PC-9 (cell line): ENCODE measurements at regions of chr15 and their contacts with region 1.

Region 1: DNA sequence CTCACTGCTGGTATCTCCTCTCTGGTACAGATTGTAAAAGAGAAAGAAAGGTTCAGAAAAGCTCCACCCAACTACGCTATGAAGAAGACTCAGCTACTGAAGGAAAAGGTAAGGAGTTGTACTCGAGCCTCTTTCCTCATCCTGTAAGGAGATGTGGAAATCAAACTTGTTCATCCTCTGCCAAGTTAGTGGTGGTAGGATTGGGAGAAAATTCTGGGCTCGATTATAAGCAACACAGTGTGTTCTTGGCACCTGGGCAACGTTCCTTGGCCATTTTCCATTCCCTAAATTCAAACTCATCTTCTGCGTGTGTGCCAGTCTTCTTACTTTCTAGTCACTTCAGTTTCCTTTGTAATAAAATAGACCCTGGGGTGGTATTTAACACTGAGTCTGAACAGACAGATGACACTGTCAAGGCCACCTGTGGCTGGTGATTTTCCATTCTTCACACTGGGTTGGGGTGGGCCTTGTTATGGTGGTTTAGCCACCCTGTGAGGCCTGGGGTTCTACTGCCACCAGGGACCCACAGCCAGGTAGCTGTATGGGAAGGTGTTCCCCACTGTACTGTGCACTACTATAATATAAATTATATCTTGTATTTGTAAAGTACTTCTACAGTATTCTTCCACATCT is 17.1 kb upstream of the ITPKA start:
- DNase-seq: no peak
- H3K4me3 ChIP-seq: no peak overlapping the region
- H3K27ac ChIP-seq: peak overlapping the region; percentile 81
- H3K4me1 ChIP-seq: peaks cover 11% of the 10 kb centered on the region
- H3K27me3 ChIP-seq: no peaks in the 10 kb centered on the region
- CTCF ChIP-seq: no peak

Region 2: GRCh38 chr15:41465822-41466421 is 10.6 kb before region 1 on chr15:
- CTCF ChIA-PET with region 1: no interaction called
- POLR2A ChIA-PET with region 1: interaction called, 10 read pairs
- intact Hi-C with region 1: no loop called
- DNase-seq: no peak
- H3K4me3 ChIP-seq: no peak overlapping the region
- H3K27ac ChIP-seq: no peak overlapping the region
- H3K4me1 ChIP-seq: no peaks in the 10 kb centered on the region
- H3K27me3 ChIP-seq: no peaks in the 10 kb centered on the region
- CTCF ChIP-seq: peak; percentile 82